ENCODE measurements at regions of chr2 and their contacts with region 1.

Region 1: DNA sequence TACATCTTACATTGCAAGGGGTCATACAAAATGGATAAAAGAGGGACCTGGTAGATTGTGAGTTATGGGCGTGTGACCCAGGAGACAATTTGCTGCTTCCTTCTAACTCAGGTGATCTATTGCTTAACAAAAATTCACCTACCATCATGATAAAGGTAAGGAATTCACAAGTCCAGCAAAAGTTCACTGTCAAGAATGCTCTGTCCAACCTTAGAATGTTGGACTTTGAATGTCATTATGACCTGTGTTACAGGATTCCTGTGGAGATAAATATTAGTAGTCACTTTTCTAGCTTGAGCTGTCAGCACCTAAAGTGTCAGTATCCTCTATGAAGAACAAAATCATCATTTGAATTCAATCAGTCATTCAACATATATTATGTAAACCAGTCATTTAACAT is 7.9 kb upstream of the KLF7 start:
- DNase-seq: no peak
- H3K4me3 ChIP-seq: no peak overlapping the region
- H3K27ac ChIP-seq: no peak overlapping the region
- H3K4me1 ChIP-seq: peaks cover 0 to 6% (median 0%) of the 10 kb centered on the region in 4 donors
- H3K27me3 ChIP-seq: no peaks in the 10 kb centered on the region
- CTCF ChIP-seq: no peak

Region 2: DNA sequence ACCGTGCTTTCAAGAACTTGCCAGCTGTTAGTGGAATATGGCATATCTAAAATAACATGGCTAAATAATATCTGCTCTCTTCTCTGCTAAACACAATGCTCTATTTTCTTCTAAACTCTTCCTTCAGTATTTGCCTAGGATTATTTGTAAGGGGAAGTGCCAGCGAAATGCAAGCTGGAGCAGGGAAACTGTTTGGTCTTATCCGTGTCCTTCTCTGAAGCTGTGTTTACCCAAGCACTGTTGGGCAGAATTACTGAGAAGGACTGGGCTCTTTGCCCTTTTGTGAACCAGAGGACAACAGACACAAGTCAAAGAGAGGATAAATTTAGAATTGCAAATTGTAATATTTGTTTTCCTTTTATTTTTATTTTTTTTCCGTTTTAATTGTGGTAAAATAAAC is 210.7 kb before region 1 on chr2:
- intact Hi-C with region 1: no loop called
- DNase-seq: no peak
- H3K4me3 ChIP-seq: no peak overlapping the region
- H3K27ac ChIP-seq: no peak overlapping the region
- H3K4me1 ChIP-seq: peaks cover 0 to 20% (median under 1%) of the 10 kb centered on the region in 4 donors
- H3K27me3 ChIP-seq: no peaks in the 10 kb centered on the region
- CTCF ChIP-seq: no peak

Region 3: DNA sequence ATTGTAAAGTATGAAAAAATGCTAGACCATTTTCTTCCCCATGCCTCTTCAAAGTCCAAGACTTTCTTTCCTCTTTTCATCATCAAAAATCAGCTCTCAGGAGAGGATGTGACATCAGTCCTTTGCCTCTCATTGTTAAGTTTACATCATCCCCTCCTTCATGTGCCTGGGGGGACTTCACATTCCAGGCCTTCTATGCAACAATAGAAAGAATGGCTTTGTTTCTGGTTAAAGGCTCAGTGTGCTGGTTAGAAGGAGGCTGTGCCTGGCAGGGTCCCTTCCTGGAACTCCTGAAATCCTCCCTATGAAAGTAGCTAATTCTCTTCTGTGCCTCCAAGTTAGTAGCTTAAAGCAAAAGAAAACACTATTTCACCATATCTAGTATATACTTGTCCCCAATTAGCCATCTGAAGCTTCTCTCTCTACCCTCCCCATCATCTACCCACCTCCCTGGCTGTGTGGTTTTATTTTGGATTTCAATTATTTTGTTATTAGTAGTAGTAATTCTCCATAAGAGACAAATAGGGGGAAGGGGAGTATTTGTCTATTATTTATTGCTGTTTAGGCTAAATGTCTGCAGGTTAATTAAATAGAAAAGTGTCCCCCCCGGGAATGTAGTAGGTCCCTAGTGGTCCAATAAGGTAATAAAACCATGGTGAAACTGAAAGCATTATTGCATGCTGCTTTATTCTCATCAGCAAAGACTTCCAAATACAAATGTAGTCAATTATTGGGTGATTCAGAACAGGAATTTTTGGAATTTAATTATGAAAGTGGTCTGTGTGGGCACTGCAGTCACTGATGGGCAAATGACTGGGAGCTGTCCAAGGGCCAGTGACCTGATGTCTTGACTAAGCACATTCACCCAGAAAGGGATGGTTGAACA is 165.3 kb before region 1 on chr2:
- intact Hi-C with region 1: no loop called
- DNase-seq: no peak
- H3K4me3 ChIP-seq: no peak overlapping the region
- H3K27ac ChIP-seq: no peak overlapping the region
- H3K4me1 ChIP-seq: no peaks in the 10 kb centered on the region
- H3K27me3 ChIP-seq: no peaks in the 10 kb centered on the region
- CTCF ChIP-seq: no peak

Region 4: DNA sequence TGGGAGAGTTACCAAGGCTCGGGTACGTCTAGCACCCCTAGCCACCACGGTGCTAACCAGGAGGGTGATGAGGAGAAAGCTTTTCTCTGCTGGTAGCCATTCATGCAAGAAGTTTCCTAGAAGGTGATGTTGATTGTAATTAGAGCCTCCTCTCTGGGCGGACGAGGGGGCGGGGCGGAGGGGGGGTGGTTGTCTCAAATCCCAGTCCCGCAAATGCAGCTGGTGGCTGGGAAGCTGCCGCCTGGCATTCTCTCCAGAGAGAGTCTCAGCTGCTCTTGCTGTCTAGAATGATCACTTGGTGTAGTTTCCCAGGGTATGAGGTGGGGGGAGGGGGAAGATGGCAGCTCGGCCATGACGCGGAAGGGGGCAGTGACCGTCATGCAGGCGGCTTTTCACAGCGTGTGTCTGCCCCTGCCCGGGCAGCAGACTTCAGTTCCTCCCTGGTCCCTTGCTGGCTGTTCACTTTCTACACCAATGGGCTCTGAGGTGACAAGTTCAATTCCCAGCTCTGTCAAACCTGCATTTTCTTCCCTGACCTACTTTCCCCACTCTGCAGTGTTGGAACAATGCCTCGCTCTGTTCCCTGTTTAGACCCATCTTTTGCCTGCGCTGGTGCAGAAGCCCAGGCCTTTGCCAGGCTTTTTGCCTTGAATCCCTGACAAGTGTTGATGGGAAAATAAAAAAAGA is 53.5 kb after region 1 on chr2:
- intact Hi-C with region 1: loop called (anchors 5 kb)
- DNase-seq: no peak
- H3K4me3 ChIP-seq: peak overlapping the region; percentile 27 to 34
- H3K27ac ChIP-seq: peak overlapping the region; percentile 57
- H3K4me1 ChIP-seq: peaks cover 0 to 44% (median 24%) of the 10 kb centered on the region in 4 donors
- H3K27me3 ChIP-seq: no peaks in the 10 kb centered on the region
- CTCF ChIP-seq: no peak